Panc1 (cell line): ENCODE measurements at regions of chr9 and their contacts with region 1.

Region 1: DNA sequence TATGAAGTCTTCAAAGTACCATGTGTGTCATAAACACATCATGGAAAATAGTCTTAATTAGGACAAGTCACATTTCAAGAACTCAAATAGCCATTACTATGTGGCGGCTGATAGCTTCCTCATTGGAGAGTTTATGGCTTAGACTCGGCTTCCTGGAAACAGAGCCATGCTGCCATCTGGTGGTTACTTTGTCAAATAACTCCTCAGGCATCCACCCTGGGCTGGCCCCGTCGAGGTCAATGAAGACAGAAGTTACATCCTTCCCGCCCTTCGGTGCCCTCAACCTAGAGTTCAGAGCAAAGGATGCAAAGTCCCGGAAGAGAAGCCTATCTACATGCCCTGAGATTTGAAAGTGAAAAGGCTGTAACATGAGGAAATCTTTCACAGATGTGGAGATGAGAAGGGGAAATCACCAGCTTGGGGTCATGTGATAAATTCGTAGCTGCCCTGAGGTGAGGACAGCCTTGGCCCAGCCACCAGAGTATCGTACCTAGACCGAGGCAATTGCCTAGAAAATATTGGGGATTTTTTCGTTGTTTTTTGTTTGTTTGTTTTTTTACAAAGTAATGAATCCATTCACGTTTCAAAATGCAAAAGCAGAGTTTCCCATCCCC is 45.5 kb upstream of the ZNF169 start:
- DNase-seq: peak; percentile 52
- ATAC-seq: peak; percentile 99
- H3K4me3 ChIP-seq: no peak overlapping the region
- H3K27ac ChIP-seq: no peak overlapping the region
- H3K4me1 ChIP-seq: no peaks in the 10 kb centered on the region
- H3K27me3 ChIP-seq: no peaks in the 10 kb centered on the region
- CTCF ChIP-seq: peak; percentile 80

Region 2: DNA sequence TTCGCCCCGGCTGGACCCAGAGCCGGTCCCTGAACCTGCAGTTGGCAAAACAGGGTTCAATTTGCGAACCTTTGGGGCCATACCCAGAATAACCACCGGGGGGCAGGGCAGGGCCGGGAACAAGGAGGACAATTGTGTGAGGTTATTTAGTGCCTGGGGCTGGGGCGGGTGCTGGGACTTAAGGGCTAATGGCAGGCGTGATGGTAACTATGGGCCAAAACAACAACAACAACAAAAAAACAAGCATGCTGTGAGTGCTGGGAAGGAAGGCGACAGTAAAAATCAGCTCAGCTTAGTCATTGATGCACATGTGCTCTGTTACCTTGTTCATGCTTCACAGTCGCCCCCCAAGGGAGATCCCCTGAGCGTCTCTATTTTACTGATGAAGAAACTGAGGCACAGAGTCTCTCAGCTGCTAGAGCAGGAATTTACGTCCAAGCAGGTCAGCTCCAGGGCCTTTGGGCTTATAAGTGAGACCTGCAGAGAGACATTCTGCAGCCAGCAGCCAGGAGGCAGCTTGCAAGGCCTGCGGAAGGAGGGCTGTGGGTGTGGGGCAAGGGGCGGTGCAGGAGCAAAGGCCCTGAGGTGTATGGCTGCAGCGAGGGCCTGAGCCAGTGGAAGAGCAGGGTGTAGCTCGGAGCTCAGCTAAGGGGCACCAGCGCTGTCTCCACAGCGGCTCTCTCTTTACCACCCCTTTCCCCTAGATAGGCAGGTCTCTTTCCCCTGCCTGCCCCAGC is 531.2 kb before region 1 on chr9:
- CTCF ChIA-PET with region 1: no interaction called
- POLR2A ChIA-PET with region 1: no interaction called
- in situ Hi-C with region 1: no loop called
- intact Hi-C with region 1: loop called (anchors 10 kb)
- DNase-seq: no peak
- ATAC-seq: peak; percentile 79
- H3K4me3 ChIP-seq: no peak overlapping the region
- H3K27ac ChIP-seq: no peak overlapping the region
- H3K4me1 ChIP-seq: no peaks in the 10 kb centered on the region
- H3K27me3 ChIP-seq: no peaks in the 10 kb centered on the region
- CTCF ChIP-seq: peak; percentile 84

Region 3: DNA sequence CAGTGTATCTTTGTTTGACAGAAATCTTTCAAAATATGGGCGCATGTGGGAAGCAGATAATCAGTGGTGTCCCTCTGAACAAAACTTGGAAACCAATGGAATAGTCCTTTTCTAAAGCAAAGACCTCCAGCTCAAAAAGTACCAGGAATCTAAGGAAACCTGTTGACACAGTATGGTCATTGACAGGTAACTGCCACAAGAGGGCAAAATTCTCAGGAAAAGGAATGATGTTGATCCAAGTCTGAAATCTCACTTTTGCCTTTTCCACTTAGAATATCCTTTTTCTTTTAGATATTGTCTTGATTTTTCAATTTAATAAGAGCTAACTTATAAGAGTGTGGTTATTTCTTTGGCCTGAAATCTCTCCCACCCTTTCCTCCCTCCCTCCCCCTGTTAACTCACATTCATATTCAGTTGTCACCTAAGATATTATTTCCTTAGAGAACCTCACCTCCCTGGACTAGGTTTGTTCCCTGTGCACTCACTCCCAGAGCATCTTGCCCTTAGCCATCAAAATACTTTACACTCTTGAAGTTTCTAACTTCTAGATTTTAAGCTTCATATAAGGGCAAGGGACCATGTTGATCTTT is 199.5 kb before region 1 on chr9:
- CTCF ChIA-PET with region 1: interaction called, 21 read pairs
- POLR2A ChIA-PET with region 1: no interaction called
- in situ Hi-C with region 1: no loop called
- intact Hi-C with region 1: loop called (anchors 1 kb)
- DNase-seq: no peak
- ATAC-seq: peak; percentile 70
- H3K4me3 ChIP-seq: no peak overlapping the region
- H3K27ac ChIP-seq: no peak overlapping the region
- H3K4me1 ChIP-seq: no peaks in the 10 kb centered on the region
- H3K27me3 ChIP-seq: no peaks in the 10 kb centered on the region
- CTCF ChIP-seq: peak; percentile 64

Region 4: GRCh38 chr9:94065535-94065961 is 148.1 kb before region 1 on chr9:
- CTCF ChIA-PET with region 1: interaction called, 3 read pairs
- POLR2A ChIA-PET with region 1: no interaction called
- in situ Hi-C with region 1: no loop called
- intact Hi-C with region 1: loop called (anchors 2 kb)
- DNase-seq: peak; percentile 54
- ATAC-seq: peak; percentile 84
- H3K4me3 ChIP-seq: no peak overlapping the region
- H3K27ac ChIP-seq: no peak overlapping the region
- H3K4me1 ChIP-seq: no peaks in the 10 kb centered on the region
- H3K27me3 ChIP-seq: no peaks in the 10 kb centered on the region
- CTCF ChIP-seq: peak; percentile 73

Region 5: GRCh38 chr9:94139672-94140417 is 73.8 kb before region 1 on chr9:
- CTCF ChIA-PET with region 1: interaction called, 22 read pairs
- POLR2A ChIA-PET with region 1: no interaction called
- in situ Hi-C with region 1: no loop called
- intact Hi-C with region 1: no loop called
- DNase-seq: peak; percentile 33
- ATAC-seq: peak; percentile 91
- H3K4me3 ChIP-seq: peak overlapping the region; percentile 4 to 24; a peak in 1 of 4 replicates
- H3K27ac ChIP-seq: peak overlapping the region; percentile 76
- H3K4me1 ChIP-seq: peaks cover 23% of the 10 kb centered on the region; the same call in 1 of the 2 replicates
- H3K27me3 ChIP-seq: no peaks in the 10 kb centered on the region
- CTCF ChIP-seq: no peak

Region 6: DNA sequence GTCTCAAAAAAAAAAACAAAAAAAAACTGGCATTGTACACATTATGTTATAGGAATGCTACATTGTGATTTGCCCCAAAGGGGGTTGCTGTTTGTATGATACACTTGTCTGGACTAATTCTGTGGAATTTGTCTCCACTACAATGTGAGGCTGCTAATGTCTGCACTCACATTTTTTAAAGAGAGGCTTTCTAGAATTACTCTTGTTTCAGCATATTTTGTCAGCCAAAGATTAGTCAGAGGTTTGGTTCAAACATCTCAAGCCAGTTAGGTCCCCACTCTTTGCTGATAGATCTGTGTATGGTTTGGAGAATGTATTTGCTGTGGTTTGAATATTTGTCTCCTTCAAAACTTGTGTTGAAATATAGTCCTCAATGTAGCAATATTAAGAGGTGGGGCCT is 13.8 kb before region 1 on chr9:
- CTCF ChIA-PET with region 1: no interaction called
- POLR2A ChIA-PET with region 1: no interaction called
- in situ Hi-C with region 1: no loop called
- intact Hi-C with region 1: no loop called
- DNase-seq: no peak
- ATAC-seq: no peak
- H3K4me3 ChIP-seq: no peak overlapping the region
- H3K27ac ChIP-seq: no peak overlapping the region
- H3K4me1 ChIP-seq: no peaks in the 10 kb centered on the region
- H3K27me3 ChIP-seq: no peaks in the 10 kb centered on the region
- CTCF ChIP-seq: no peak